ENCODE measurements at regions of chrX and their contacts with region 1.

Region 1: GRCh38 chrX:13506574-13506973 is 62.8 kb upstream of the EGFL6 start:
- DNase-seq: peak; percentile 60
- H3K4me3 ChIP-seq: no peak overlapping the region
- H3K27ac ChIP-seq: no peak overlapping the region
- H3K4me1 ChIP-seq: no peaks in the 10 kb centered on the region
- H3K27me3 ChIP-seq: no peaks in the 10 kb centered on the region

Region 2: DNA sequence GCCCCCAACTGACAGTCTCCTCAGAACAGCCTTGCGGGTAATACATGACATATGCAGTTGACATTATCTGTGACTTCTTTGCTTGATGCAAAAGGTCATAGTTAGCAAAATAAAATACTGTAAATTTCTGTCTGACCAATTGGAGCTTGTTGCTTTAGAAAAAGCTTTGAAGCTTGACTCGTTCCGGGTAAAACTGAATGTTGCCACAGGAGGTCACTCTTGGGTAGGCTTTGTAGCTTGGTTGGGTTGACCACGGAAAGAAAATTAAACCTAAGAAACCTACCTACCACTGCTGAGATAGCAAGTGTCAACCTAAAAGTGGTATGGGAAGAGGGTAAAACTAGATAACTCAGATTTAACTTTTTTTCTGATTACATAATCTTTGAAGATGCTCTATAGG is 692.2 kb before region 1 on chrX:
- in situ Hi-C with region 1: loop called (anchors 25 kb)
- DNase-seq: peak; percentile 56
- H3K4me3 ChIP-seq: no peak overlapping the region
- H3K27ac ChIP-seq: no peak overlapping the region
- H3K4me1 ChIP-seq: no peaks in the 10 kb centered on the region
- H3K27me3 ChIP-seq: no peaks in the 10 kb centered on the region

Region 3: DNA sequence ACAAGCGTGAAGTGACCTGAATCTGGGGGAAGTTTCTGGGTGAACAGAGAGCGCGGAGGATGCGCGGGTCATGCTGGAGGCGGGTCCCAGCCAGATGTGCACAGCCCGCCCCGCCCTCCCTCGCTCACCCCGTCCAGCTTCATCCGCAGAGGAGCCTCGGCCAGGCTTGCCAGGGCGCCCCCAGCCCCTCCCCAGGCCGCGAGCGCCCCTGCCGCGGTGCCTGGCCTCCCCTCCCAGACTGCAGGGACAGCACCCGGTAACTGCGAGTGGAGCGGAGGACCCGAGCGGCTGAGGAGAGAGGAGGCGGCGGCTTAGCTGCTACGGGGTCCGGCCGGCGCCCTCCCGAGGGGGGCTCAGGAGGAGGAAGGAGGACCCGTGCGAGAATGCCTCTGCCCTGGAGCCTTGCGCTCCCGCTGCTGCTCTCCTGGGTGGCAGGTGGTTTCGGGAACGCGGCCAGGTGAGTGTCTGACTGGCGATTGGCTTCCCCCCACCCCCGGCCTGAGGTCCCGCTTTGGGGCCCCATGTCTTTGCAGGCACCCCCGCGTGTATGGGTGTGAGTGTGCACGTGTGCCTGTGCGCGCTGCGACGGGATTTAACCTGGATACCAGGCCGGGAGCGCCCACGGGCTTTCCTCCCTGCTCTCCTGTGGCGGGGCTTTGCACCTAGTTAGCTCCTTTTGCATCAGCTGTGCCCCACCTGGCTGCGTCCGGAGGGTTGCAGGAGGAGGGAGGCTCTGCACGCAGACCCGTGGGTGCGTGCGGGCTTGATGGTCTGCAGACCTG is 63.1 kb after region 1 on chrX and contains the start of gene EGFL6:
- in situ Hi-C with region 1: no loop called
- DNase-seq: no peak
- H3K4me3 ChIP-seq: no peak within 1 kb of the TSS
- H3K27ac ChIP-seq: no peak within 1 kb of the TSS
- H3K4me1 ChIP-seq: no peaks in the 10 kb centered on the region
- H3K27me3 ChIP-seq: peaks cover 3% of the 10 kb centered on the region; the same call in 1 of the 2 replicates
- total RNA-seq, gene EGFL6: not detected in 2 replicates